ENCODE measurements at regions of chr5 and their contacts with region 1.

Region 1: DNA sequence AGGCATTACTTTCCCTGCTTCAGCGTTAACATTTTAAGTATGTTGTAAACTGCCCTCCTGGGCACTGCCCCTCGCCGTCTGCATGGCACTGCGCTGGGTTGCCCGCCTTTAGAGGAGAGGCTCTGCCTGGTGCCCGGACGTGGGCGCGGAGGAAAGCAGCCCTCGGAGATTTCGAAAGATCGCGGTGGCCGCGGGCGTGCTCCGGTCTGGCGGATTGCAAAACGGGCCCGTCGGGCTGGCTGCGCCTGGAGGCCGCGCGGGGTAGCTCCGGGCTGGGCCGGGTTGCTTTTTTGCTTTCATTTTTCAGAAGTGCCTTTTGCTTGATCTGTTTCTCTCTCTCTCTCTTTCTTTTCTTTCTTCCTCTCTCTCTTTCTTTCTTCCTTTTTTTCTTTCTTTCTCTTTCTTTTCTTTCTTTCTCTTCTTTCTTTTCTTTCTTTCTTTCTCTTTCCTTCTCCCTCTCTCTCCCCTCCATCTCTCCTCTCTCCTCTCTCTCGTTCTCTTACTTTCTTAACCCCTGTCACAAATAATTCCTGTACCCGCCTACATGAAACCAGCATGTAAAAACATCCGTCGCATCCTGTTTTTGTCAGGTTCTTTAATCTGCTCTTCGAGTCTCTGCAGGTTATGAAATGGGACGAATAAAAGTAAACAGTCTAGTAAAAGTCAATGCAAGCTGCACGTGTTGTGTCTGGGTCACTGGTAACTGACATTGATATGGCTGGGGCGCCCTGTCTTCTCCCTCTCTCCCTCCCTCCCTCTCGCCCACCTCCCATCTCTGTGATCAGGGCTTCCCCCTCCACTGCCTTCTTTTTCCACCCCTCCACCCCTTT is 1.7 kb downstream of the FST start:
- DNase-seq: peak; percentile 32
- ATAC-seq: peak; percentile 73
- H3K4me3 ChIP-seq: peak overlapping the region; percentile 53 to 59
- H3K27ac ChIP-seq: no peak overlapping the region
- H3K4me1 ChIP-seq: peaks cover 0 to 31% of the 10 kb centered on the region in 2 experiments; a peak in 3 of 4 replicates
- H3K27me3 ChIP-seq: peaks cover 13% of the 10 kb centered on the region; the same call in 1 of the 2 replicates
- CTCF ChIP-seq: peak in 1 of 3 experiments; percentile 17; a peak in 2 of 6 replicates
- POLR2A ChIP-seq: no peak
- RAD21 ChIP-seq: no peak

Region 2: DNA sequence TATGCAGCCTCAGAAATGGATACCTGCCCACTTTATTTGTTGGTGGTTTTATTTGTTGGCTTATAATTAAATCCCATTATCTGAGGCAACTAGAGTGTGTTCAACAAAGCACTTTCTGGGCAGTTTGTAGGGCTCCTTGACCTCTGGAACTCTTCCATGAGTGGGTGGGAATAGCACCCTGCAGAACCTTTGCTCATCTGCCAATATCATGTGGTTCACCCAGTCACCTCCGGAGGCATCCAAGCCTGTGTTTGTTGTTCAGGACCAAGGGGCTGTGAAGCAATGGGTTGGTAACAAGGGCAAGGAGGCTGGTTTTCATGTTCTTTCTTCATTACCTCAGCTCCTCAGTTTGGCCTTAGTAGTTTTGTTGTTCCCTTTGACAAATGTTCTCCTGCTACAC is 392.3 kb after region 1 on chr5:
- CTCF ChIA-PET with region 1: no interaction called
- POLR2A ChIA-PET with region 1: no interaction called
- RAD21 ChIA-PET with region 1: no interaction called
- intact Hi-C with region 1: loop called (anchors 2 kb)
- DNase-seq: no peak
- ATAC-seq: peak; percentile 76
- H3K4me3 ChIP-seq: no peak overlapping the region
- H3K27ac ChIP-seq: no peak overlapping the region
- H3K4me1 ChIP-seq: no peaks in the 10 kb centered on the region
- H3K27me3 ChIP-seq: no peaks in the 10 kb centered on the region
- CTCF ChIP-seq: peak in 2 of 3 experiments; percentile 18 to 25; a peak in 2 of 6 replicates
- POLR2A ChIP-seq: no peak
- RAD21 ChIP-seq: no peak

Region 3: GRCh38 chr5:53991942-53992341 is 509.8 kb after region 1 on chr5:
- CTCF ChIA-PET with region 1: no interaction called
- POLR2A ChIA-PET with region 1: no interaction called
- RAD21 ChIA-PET with region 1: no interaction called
- intact Hi-C with region 1: loop called (anchors 10 kb)
- DNase-seq: no peak
- ATAC-seq: no peak
- H3K4me3 ChIP-seq: no peak overlapping the region
- H3K27ac ChIP-seq: no peak overlapping the region
- H3K4me1 ChIP-seq: no peaks in the 10 kb centered on the region
- H3K27me3 ChIP-seq: no peaks in the 10 kb centered on the region
- CTCF ChIP-seq: peak in 2 of 3 experiments; percentile 46 to 69; a peak in 3 of 6 replicates
- POLR2A ChIP-seq: no peak
- RAD21 ChIP-seq: peak; percentile 35; the same call in 1 of the 2 replicates

Region 4: GRCh38 chr5:54234304-54234933 is 752.3 kb after region 1 on chr5:
- CTCF ChIA-PET with region 1: interaction called, 10 read pairs
- POLR2A ChIA-PET with region 1: no interaction called
- RAD21 ChIA-PET with region 1: no interaction called
- intact Hi-C with region 1: no loop called
- DNase-seq: no peak
- ATAC-seq: no peak
- H3K4me3 ChIP-seq: no peak overlapping the region
- H3K27ac ChIP-seq: no peak overlapping the region
- H3K4me1 ChIP-seq: no peaks in the 10 kb centered on the region
- H3K27me3 ChIP-seq: no peaks in the 10 kb centered on the region
- CTCF ChIP-seq: peak; percentile 28 to 59 (median 36); a peak in 4 of 6 replicates
- POLR2A ChIP-seq: no peak
- RAD21 ChIP-seq: peak; percentile 38

Measured in HCT116 (cell line).